Psoas muscle (tissue), 8 donors: ENCODE measurements at regions of chr20 and their contacts with region 1.

Region 1: GRCh38 chr20:38528167-38528566 is 52.8 kb upstream of the ADIG start:
- DNase-seq: no peak
- ATAC-seq: no peak
- H3K4me3 ChIP-seq: no peak overlapping the region
- H3K27ac ChIP-seq: no peak overlapping the region
- H3K4me1 ChIP-seq: no peaks in the 10 kb centered on the region
- H3K27me3 ChIP-seq: no peaks in the 10 kb centered on the region
- CTCF ChIP-seq: no peak

Region 2: GRCh38 chr20:38757145-38757775 is 229.1 kb after region 1 on chr20:
- intact Hi-C with region 1: loop called in 1 of 2 experiments (anchors 5 kb)
- DNase-seq: no peak
- ATAC-seq: no peak
- H3K4me3 ChIP-seq: no peak overlapping the region
- H3K27ac ChIP-seq: no peak overlapping the region
- H3K4me1 ChIP-seq: no peaks in the 10 kb centered on the region
- H3K27me3 ChIP-seq: no peaks in the 10 kb centered on the region
- CTCF ChIP-seq: no peak